ENCODE measurements at regions of chr20 and their contacts with region 1.

Region 1: DNA sequence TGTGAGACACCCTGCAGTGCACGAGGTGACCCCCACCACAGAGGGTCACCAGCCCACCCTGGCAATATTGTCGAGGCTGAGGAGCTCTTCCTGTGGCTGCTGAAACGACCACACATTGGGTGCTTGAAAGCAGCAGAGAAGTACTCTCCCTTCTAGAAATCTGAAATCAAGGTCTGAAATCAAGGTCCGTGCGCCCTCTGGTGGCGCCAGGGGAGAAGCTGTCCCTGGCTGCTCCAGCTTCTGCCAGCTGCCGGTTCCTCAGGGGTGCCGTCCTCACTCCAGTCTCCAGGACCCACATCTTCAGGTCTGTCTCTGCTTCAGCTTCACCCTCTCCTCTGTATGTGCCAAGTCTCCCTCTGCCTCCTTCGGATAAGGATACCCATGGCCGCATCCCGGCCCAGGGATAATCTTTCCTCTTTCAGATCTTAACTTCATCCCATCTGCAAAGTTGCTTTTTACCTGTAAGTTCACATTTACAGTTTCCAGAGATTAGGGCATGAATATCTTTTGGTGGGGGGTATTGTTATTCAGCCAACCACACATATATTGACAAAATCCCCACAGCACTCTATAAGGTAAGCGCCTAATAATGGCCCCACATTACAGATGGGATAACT is 108.3 kb upstream of the PHACTR3 start:
- DNase-seq: peak; percentile 47 to 87
- H3K4me3 ChIP-seq: no peak overlapping the region
- H3K27ac ChIP-seq: no peak overlapping the region
- H3K4me1 ChIP-seq: peaks cover 0 to 3% (median 0%) of the 10 kb centered on the region in 4 experiments; a peak in 1 of 7 replicates
- H3K27me3 ChIP-seq: peaks cover 0 to 2% (median 0%) of the 10 kb centered on the region in 4 experiments; a peak in 3 of 7 replicates
- CTCF ChIP-seq: peak; percentile 81 to 89 (median 89)
- EP300 ChIP-seq: no peak
- POLR2A ChIP-seq: no peak
- RAD21 ChIP-seq: peak; percentile 82 to 87

Region 2: GRCh38 chr20:59455402-59456341 is 40.3 kb before region 1 on chr20:
- CTCF ChIA-PET with region 1: interaction called, 40 read pairs
- POLR2A ChIA-PET with region 1: no interaction called
- DNase-seq: peak in 1 of 2 experiments; percentile 50
- H3K4me3 ChIP-seq: no peak overlapping the region
- H3K27ac ChIP-seq: no peak overlapping the region
- H3K4me1 ChIP-seq: no peaks in the 10 kb centered on the region; a peak in 3 of 7 replicates
- H3K27me3 ChIP-seq: no peaks in the 10 kb centered on the region
- CTCF ChIP-seq: peak in 2 of 3 experiments; percentile 69 to 73; a peak in 3 of 4 replicates
- EP300 ChIP-seq: no peak
- POLR2A ChIP-seq: no peak
- RAD21 ChIP-seq: peak; percentile 87 to 91

Region 3: GRCh38 chr20:59508729-59509128 is 12.7 kb after region 1 on chr20:
- CTCF ChIA-PET with region 1: interaction called, 12 read pairs
- POLR2A ChIA-PET with region 1: no interaction called
- DNase-seq: no peak
- H3K4me3 ChIP-seq: no peak overlapping the region
- H3K27ac ChIP-seq: no peak overlapping the region
- H3K4me1 ChIP-seq: no peaks in the 10 kb centered on the region
- H3K27me3 ChIP-seq: no peaks in the 10 kb centered on the region
- CTCF ChIP-seq: no peak
- EP300 ChIP-seq: no peak
- POLR2A ChIP-seq: no peak
- RAD21 ChIP-seq: no peak

Region 4: DNA sequence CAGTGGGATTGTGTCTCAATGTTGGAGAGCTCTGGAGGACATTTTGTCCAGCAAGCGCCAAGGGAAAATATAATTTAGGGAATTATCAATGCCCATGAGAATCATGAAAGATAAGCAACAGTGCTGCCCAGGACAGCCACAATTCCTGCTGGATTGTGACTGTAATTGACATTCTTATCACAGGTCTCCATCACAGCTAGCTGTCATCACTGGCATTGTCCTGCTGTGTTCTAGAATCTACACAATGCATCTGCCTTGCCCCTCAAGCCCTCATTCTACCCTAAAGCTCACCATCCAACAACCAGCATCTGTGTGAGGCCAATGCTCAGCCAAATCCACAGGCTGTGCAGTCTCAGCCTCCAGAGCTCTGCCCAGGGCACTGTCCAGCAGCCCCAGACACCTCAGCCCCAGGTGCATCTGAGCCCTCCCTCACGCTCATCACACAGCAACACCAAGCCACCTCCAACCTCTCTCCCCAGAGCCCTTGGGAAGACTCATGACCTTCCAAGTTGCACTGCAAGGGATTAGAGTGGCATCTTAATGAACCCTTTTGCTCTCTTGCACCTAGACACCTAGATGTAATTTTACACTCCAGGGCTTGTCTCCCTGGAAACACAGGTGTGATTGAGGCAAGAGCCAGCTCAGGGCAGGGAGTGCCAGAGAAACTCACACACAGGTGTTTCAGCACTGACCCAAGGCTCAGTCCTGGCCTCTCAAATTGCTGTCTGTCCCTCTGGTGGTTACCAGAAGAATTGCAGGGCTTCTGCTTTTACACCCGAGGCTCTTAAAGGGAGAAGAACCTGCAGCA is 23.1 kb after region 1 on chr20:
- CTCF ChIA-PET with region 1: interaction called, 16 read pairs
- POLR2A ChIA-PET with region 1: no interaction called
- DNase-seq: peak in 1 of 2 experiments; percentile 62
- H3K4me3 ChIP-seq: no peak overlapping the region
- H3K27ac ChIP-seq: no peak overlapping the region
- H3K4me1 ChIP-seq: no peaks in the 10 kb centered on the region; a peak in 1 of 7 replicates
- H3K27me3 ChIP-seq: peaks cover 0 to 4% (median 0%) of the 10 kb centered on the region in 4 experiments; a peak in 2 of 7 replicates
- CTCF ChIP-seq: peak; percentile 67 to 84 (median 79)
- EP300 ChIP-seq: no peak
- POLR2A ChIP-seq: no peak
- RAD21 ChIP-seq: peak in 1 of 2 experiments; percentile 55; a peak in 3 of 4 replicates

Measured in H1 (cell line).